ENCODE measurements at regions of chr10 and their contacts with region 1.

Region 1: GRCh38 chr10:118568327-118568848 is 27.1 kb downstream of the PRLHR start:
- DNase-seq: no peak
- ATAC-seq: peak; percentile 80

Region 2: GRCh38 chr10:118423800-118424479 is 144.4 kb before region 1 on chr10:
- intact Hi-C with region 1: no loop called
- DNase-seq: peak; percentile 88
- ATAC-seq: peak; percentile 96

Region 3: DNA sequence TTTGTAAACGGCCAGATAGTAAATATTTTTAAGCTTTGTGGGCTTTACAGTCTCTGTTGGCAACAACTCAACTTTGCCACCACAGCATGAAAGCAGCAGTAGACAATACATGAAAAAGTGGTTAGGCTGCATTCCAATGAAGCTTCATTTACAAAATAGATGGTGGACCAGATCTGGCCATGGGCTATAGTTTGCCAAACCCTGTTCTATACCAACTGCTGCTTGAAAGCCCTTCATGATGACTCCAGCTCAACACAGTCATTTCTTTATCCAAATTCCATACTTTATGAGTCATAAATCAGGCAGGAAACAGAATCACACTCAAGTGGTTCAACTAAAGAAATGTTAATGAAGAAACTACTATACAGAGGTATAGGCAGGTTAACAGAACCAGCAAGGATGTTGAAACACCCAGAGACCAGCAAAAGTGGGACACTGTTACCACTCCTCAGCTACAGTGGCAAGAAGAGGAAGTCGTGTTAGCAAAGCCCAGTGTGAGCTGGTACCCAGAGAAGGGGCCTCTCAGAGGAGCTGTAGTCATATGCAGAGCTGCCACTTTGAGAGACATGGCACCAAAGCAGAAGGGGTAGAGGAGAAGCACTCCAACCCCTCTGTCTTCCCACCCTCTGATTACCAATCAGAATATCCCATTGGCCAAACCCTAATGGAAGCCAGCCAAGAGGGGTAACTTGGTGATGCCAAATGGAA is 45.4 kb before region 1 on chr10:
- intact Hi-C with region 1: no loop called
- DNase-seq: no peak
- ATAC-seq: no peak

Region 4: GRCh38 chr10:118626953-118627352 is 58.6 kb after region 1 on chr10:
- intact Hi-C with region 1: no loop called
- DNase-seq: no peak
- ATAC-seq: no peak

Region 5: GRCh38 chr10:118720685-118721538 is 152.5 kb after region 1 on chr10:
- intact Hi-C with region 1: loop called (anchors 5 kb)
- DNase-seq: no peak
- ATAC-seq: peak; percentile 69

Region 6: GRCh38 chr10:118800920-118801319 is 232.5 kb after region 1 on chr10:
- intact Hi-C with region 1: loop called (anchors 5 kb)
- DNase-seq: no peak
- ATAC-seq: peak; percentile 78